Kidney (tissue), 22 donors: ENCODE measurements at regions of chr11 and their contacts with region 1.

Region 1: GRCh38 chr11:34357701-34358257 is at the start of gene ABTB2:
- DNase-seq: peak; percentile 99
- H3K4me3 ChIP-seq: peak within 1 kb of the TSS; percentile 78 to 86 (median 79)
- H3K27ac ChIP-seq: peak within 1 kb of the TSS; percentile 80 to 84
- H3K4me1 ChIP-seq: peaks cover 0 to 29% (median 4%) of the 10 kb centered on the region in 3 donors
- H3K27me3 ChIP-seq: peaks cover 11% of the 10 kb centered on the region
- CTCF ChIP-seq: no peak
- total RNA-seq, gene ABTB2: 22.1 TPM

Region 2: GRCh38 chr11:34174412-34175041 is 183.3 kb before region 1 on chr11:
- intact Hi-C with region 1: loop called (anchors 10 kb)
- DNase-seq: peak; percentile 87 to 93 (median 91)
- H3K4me3 ChIP-seq: peak overlapping the region in 2 of 3 donors; percentile 36 to 42
- H3K27ac ChIP-seq: no peak overlapping the region
- H3K4me1 ChIP-seq: peaks cover 0 to 5% (median 0%) of the 10 kb centered on the region in 3 donors
- H3K27me3 ChIP-seq: no peaks in the 10 kb centered on the region
- CTCF ChIP-seq: peak; percentile 99

Region 3: DNA sequence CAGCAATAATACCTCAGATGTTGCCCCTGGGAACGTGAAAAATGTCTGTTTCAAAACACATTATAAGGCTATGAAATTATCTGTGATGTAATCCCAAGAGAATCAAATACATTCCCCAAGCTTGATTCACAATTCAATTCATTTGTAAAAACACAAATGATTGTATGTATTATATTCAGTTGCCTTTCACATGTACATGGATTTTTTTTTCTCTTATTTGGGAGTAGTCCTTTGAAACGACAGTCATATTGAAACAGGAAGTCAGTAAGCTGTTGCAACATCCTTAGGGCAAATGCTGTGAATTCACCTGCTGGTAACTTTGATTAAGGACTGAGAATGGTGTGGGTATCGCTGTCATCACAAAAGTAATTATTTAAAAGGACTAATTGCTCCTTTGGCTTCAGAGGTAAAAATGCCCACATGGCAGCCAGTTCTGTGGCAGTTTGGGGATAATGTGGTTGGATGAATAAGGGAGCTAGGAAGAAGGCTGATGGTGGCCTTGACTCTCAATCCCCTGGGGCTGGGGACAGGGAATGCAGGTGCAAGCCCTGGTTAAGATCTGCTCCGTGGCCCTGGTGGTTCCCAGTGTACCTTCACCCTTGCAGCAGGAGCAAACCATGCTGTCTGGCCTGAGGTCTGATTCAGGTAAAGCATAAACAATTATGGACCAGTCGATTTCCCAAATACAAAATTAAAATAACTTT is 276.4 kb after region 1 on chr11:
- intact Hi-C with region 1: no loop called
- DNase-seq: no peak
- H3K4me3 ChIP-seq: no peak overlapping the region
- H3K27ac ChIP-seq: peak overlapping the region in 1 of 2 donors; percentile 3
- H3K4me1 ChIP-seq: peaks cover 3 to 6% (median 4%) of the 10 kb centered on the region in 3 donors
- H3K27me3 ChIP-seq: no peaks in the 10 kb centered on the region
- CTCF ChIP-seq: no peak